ENCODE measurements at regions of chr1 and their contacts with region 1.

Region 1: DNA sequence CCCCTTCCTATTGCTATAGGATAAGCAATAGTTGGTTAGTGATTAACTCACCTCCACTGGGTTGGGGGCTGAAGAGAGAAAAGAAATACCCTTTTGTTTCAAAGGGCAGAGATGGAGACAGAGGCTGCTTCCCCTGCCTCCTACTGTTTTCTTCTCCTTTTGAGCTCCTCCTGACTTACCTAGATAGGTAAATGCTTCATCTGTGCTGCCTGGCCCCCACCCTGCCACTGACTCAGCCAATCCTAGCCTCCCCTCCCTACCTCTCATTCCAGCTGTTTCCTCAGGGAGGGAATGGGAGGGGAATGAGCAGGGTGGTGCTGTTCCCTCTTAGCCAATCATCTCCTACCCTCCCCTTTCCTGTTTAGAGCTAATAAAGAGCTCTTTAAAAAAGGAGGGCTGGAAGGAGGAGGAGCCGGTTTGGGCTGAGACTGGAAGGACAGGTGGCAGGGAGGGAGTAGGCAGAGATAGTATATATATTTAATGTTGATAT is at the start of gene C1orf116:
- DNase-seq: peak; percentile 89 to 93
- H3K4me3 ChIP-seq: peak within 1 kb of the TSS; percentile 41
- H3K4me3 Mint-ChIP-seq: peak within 1 kb of the TSS; percentile 78
- H3K27ac Mint-ChIP-seq: peak within 1 kb of the TSS; percentile 88
- H3K4me1 ChIP-seq: peaks cover 51% of the 10 kb centered on the region
- H3K4me1 Mint-ChIP-seq: peaks cover 36% of the 10 kb centered on the region
- H3K27me3 ChIP-seq: no peaks in the 10 kb centered on the region
- H3K27me3 Mint-ChIP-seq: no peaks in the 10 kb centered on the region
- CTCF ChIP-seq: no peak
- total RNA-seq, gene C1orf116: 8.7 and 10.4 TPM in 2 replicates

Region 2: GRCh38 chr1:206923009-206923960 is 109.3 kb before region 1 on chr1:
- CTCF ChIA-PET with region 1: no interaction called
- POLR2A ChIA-PET with region 1: no interaction called
- intact Hi-C with region 1: no loop called
- DNase-seq: no peak
- H3K4me3 ChIP-seq: no peak overlapping the region
- H3K4me3 Mint-ChIP-seq: no peak overlapping the region
- H3K27ac Mint-ChIP-seq: no peak overlapping the region
- H3K4me1 ChIP-seq: peaks cover 11% of the 10 kb centered on the region
- H3K4me1 Mint-ChIP-seq: no peaks in the 10 kb centered on the region
- H3K27me3 ChIP-seq: no peaks in the 10 kb centered on the region
- H3K27me3 Mint-ChIP-seq: no peaks in the 10 kb centered on the region
- CTCF ChIP-seq: no peak

Region 3: GRCh38 chr1:207007352-207008033 is 25.1 kb before region 1 on chr1:
- CTCF ChIA-PET with region 1: interaction called, 3 read pairs
- POLR2A ChIA-PET with region 1: interaction called, 7 read pairs
- intact Hi-C with region 1: loop called (anchors 1 kb)
- DNase-seq: peak; percentile 76 to 81
- H3K4me3 ChIP-seq: no peak overlapping the region
- H3K4me3 Mint-ChIP-seq: peak overlapping the region; percentile 31
- H3K27ac Mint-ChIP-seq: peak overlapping the region; percentile 97
- H3K4me1 ChIP-seq: peaks cover 72% of the 10 kb centered on the region
- H3K4me1 Mint-ChIP-seq: peaks cover 49% of the 10 kb centered on the region
- H3K27me3 ChIP-seq: no peaks in the 10 kb centered on the region
- H3K27me3 Mint-ChIP-seq: no peaks in the 10 kb centered on the region
- CTCF ChIP-seq: no peak

Region 4: GRCh38 chr1:207017615-207018559 is 14.7 kb before region 1 on chr1:
- CTCF ChIA-PET with region 1: interaction called, 11 read pairs
- POLR2A ChIA-PET with region 1: interaction called, 25 read pairs
- intact Hi-C with region 1: loop called (anchors 1 kb)
- DNase-seq: no peak
- H3K4me3 ChIP-seq: no peak overlapping the region
- H3K4me3 Mint-ChIP-seq: no peak overlapping the region
- H3K27ac Mint-ChIP-seq: no peak overlapping the region
- H3K4me1 ChIP-seq: peaks cover 32% of the 10 kb centered on the region
- H3K4me1 Mint-ChIP-seq: peaks cover 31% of the 10 kb centered on the region
- H3K27me3 ChIP-seq: no peaks in the 10 kb centered on the region
- H3K27me3 Mint-ChIP-seq: no peaks in the 10 kb centered on the region
- CTCF ChIP-seq: no peak

Region 5: DNA sequence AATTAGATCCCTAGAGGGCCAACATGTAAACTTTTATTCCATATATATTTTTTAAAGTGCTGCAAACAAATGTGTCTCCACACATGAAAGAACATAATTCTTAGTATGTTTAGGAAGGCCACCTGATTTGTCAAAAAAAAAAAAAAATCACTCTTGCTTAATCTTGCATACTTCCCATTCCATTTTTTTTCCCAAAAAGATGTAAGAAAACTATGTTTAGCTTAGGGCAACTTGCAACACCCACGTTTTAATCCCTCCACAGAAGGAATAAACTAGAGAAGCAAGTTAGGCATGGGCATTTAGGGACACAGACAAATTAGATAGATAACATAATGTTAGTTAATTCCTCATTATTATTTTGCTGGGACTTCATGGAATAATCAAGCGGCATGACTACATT is 12.9 kb after region 1 on chr1:
- CTCF ChIA-PET with region 1: interaction called, 12 read pairs
- POLR2A ChIA-PET with region 1: interaction called, 10 read pairs
- intact Hi-C with region 1: loop called (anchors 2 kb)
- DNase-seq: no peak
- H3K4me3 ChIP-seq: no peak overlapping the region
- H3K4me3 Mint-ChIP-seq: no peak overlapping the region
- H3K27ac Mint-ChIP-seq: no peak overlapping the region
- H3K4me1 ChIP-seq: peaks cover 39% of the 10 kb centered on the region
- H3K4me1 Mint-ChIP-seq: no peaks in the 10 kb centered on the region
- H3K27me3 ChIP-seq: no peaks in the 10 kb centered on the region
- H3K27me3 Mint-ChIP-seq: no peaks in the 10 kb centered on the region
- CTCF ChIP-seq: no peak

Region 6: GRCh38 chr1:207052911-207053769 is 20.6 kb after region 1 on chr1 and contains the start of gene PFKFB2:
- CTCF ChIA-PET with region 1: interaction called, 15 read pairs
- POLR2A ChIA-PET with region 1: interaction called, 39 read pairs
- intact Hi-C with region 1: loop called (anchors 2 kb)
- DNase-seq: peak; percentile 100
- H3K4me3 ChIP-seq: peak within 1 kb of the TSS; percentile 73
- H3K4me3 Mint-ChIP-seq: peak within 1 kb of the TSS; percentile 94
- H3K27ac Mint-ChIP-seq: peak within 1 kb of the TSS; percentile 97
- H3K4me1 ChIP-seq: peaks cover 4% of the 10 kb centered on the region
- H3K4me1 Mint-ChIP-seq: peaks cover 15% of the 10 kb centered on the region
- H3K27me3 ChIP-seq: no peaks in the 10 kb centered on the region
- H3K27me3 Mint-ChIP-seq: no peaks in the 10 kb centered on the region
- CTCF ChIP-seq: no peak
- total RNA-seq, gene PFKFB2: 36.4 and 38.9 TPM in 2 replicates

Region 7: DNA sequence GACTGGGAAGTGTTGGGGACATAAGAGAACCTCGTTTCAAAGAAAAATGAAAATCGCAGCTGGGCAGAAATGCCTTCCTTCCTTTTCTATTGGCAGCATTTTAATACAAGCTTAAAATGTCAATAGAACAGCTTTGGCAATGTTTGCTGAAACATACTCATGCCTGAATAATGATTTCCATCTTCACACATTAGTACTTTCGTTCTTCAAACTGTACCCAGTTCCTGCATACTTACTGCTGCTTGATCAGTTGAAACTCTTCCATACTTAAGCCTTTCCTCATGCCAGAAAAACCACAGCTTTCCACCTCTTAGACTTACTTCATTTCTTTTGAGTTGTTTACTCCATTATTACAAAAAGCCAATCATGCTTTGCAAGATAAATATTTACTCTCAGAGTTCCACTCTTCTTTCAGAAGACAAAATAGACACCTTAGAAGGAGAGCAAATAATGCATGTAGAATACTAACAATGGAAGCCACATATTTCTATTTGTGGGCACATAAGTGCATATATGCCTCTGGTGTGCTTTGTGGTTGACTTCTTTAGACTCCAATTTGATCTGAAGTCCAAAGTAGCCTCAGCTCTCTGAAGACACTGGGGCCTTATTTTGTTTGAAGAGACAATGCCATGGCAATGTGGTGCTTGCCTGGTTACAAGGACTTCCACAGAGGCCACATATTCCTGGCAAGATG is 266.2 kb after region 1 on chr1:
- CTCF ChIA-PET with region 1: no interaction called
- POLR2A ChIA-PET with region 1: no interaction called
- intact Hi-C with region 1: no loop called
- DNase-seq: no peak
- H3K4me3 ChIP-seq: no peak overlapping the region
- H3K4me3 Mint-ChIP-seq: no peak overlapping the region
- H3K27ac Mint-ChIP-seq: no peak overlapping the region
- H3K4me1 ChIP-seq: peaks cover 7% of the 10 kb centered on the region; the same call in 1 of the 2 replicates
- H3K4me1 Mint-ChIP-seq: peaks cover 13% of the 10 kb centered on the region
- H3K27me3 ChIP-seq: no peaks in the 10 kb centered on the region
- H3K27me3 Mint-ChIP-seq: no peaks in the 10 kb centered on the region
- CTCF ChIP-seq: no peak

Region 8: DNA sequence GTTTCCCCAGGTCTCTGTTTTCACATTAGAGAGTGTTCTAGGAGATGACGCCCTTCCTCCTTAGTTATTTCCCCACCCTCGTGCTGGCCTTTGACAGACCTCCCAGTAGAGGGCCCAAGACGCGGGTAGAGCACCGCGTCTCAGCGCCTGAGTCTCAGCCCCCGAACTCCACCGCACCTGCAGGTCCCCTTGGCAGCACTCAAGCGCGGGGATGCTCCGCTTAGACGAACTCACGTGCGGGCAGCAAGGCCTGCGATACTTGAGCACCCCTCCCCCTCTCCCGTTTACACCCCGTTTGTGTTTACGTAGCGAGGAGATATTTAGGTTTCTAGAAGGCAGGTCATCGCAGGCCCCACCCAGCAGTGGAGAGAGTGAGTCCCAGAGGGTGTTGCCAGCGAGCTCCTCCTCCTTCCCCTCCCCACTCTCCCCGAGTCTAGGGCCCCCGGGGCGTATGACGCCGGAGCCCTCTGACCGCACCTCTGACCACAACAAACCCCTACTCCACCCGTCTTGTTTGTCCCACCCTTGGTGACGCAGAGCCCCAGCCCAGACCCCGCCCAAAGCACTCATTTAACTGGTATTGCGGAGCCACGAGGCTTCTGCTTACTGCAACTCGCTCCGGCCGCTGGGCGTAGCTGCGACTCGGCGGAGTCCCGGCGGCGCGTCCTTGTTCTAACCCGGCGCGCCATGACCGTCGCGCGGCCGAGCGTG is 288.7 kb after region 1 on chr1 and contains the start of gene CD55:
- CTCF ChIA-PET with region 1: interaction called, 3 read pairs
- POLR2A ChIA-PET with region 1: interaction called, 11 read pairs
- intact Hi-C with region 1: no loop called
- DNase-seq: peak; percentile 99
- H3K4me3 ChIP-seq: peak within 1 kb of the TSS; percentile 80
- H3K4me3 Mint-ChIP-seq: peak within 1 kb of the TSS; percentile 83
- H3K27ac Mint-ChIP-seq: peak within 1 kb of the TSS; percentile 95
- H3K4me1 ChIP-seq: peaks cover 39% of the 10 kb centered on the region
- H3K4me1 Mint-ChIP-seq: peaks cover 17% of the 10 kb centered on the region
- H3K27me3 ChIP-seq: no peaks in the 10 kb centered on the region
- H3K27me3 Mint-ChIP-seq: no peaks in the 10 kb centered on the region
- CTCF ChIP-seq: peak; percentile 34 to 41
- total RNA-seq, gene CD55: 195 and 197 TPM in 2 replicates

Measured in Caco-2 (cell line).